Calu3 (cell line): ENCODE measurements at regions of chr3 and their contacts with region 1.

Region 1: GRCh38 chr3:48439820-48440589 is at the starts of genes CCDC51 and TMA7:
- DNase-seq: peak; percentile 97
- H3K4me3 Mint-ChIP-seq: peak within 1 kb of the TSS; percentile 90
- H3K27ac Mint-ChIP-seq: peak within 1 kb of the TSS; percentile 88
- H3K4me1 Mint-ChIP-seq: peaks cover 21% of the 10 kb centered on the region
- H3K27me3 Mint-ChIP-seq: no peaks in the 10 kb centered on the region
- CTCF ChIP-seq: no peak
- total RNA-seq, gene CCDC51: 18.9 and 19.9 TPM in 2 replicates
- total RNA-seq, gene TMA7: 139 and 171 TPM in 2 replicates

Region 2: GRCh38 chr3:47688488-47688887 is 751.5 kb before region 1 on chr3:
- CTCF ChIA-PET with region 1: no interaction called
- intact Hi-C with region 1: no loop called
- DNase-seq: no peak
- H3K4me3 Mint-ChIP-seq: no peak overlapping the region
- H3K27ac Mint-ChIP-seq: no peak overlapping the region
- H3K4me1 Mint-ChIP-seq: no peaks in the 10 kb centered on the region
- H3K27me3 Mint-ChIP-seq: no peaks in the 10 kb centered on the region
- CTCF ChIP-seq: no peak

Region 3: DNA sequence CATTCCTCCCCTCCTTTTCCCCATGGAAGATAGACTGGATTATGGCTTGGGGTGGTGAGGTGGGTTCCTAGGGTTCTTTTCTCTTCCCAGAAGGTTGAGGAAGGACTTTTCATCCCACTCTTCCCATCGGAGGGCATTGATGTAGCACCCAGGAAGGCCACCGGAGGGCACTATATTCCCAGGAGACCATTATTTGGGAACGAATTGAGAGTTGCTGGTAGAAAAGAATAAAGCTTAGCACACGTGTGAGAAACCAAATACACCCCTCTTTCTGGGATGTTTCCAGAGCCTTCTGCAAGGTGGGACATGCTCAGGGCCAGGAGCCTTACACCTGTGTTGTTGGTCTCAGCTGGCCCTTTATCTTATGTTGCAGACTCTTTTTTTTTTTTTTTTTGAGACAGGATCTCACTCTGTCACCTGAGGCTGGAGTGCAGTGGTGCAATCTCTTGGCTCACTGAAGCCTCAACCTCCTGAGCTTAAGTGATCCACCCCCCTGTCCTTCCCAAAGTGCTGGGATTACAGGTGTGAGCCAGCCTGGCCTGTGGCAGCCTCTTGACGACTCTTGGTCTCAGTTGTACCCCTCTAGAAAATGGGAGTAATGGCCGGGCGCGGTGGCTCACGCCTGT is 245.4 kb before region 1 on chr3:
- CTCF ChIA-PET with region 1: interaction called, 16 read pairs
- intact Hi-C with region 1: no loop called
- DNase-seq: peak; percentile 78
- H3K4me3 Mint-ChIP-seq: no peak overlapping the region
- H3K27ac Mint-ChIP-seq: no peak overlapping the region
- H3K4me1 Mint-ChIP-seq: peaks cover 13% of the 10 kb centered on the region
- H3K27me3 Mint-ChIP-seq: peaks cover 10% of the 10 kb centered on the region
- CTCF ChIP-seq: peak; percentile 70

Region 4: GRCh38 chr3:48232734-48233133 is 207.3 kb before region 1 on chr3:
- CTCF ChIA-PET with region 1: interaction called, 4 read pairs
- intact Hi-C with region 1: loop called (anchors 2 kb)
- DNase-seq: peak; percentile 82
- H3K4me3 Mint-ChIP-seq: no peak overlapping the region
- H3K27ac Mint-ChIP-seq: no peak overlapping the region
- H3K4me1 Mint-ChIP-seq: peaks cover 14% of the 10 kb centered on the region
- H3K27me3 Mint-ChIP-seq: no peaks in the 10 kb centered on the region
- CTCF ChIP-seq: peak; percentile 43

Region 5: GRCh38 chr3:48268381-48269183 is 171.4 kb before region 1 on chr3:
- CTCF ChIA-PET with region 1: interaction called, 83 read pairs
- intact Hi-C with region 1: loop called (anchors 1 kb)
- DNase-seq: peak; percentile 74
- H3K4me3 Mint-ChIP-seq: peak overlapping the region; percentile 57
- H3K27ac Mint-ChIP-seq: peak overlapping the region; percentile 84
- H3K4me1 Mint-ChIP-seq: peaks cover 33% of the 10 kb centered on the region
- H3K27me3 Mint-ChIP-seq: no peaks in the 10 kb centered on the region
- CTCF ChIP-seq: no peak

Region 6: GRCh38 chr3:48273594-48274211 is 166.3 kb before region 1 on chr3:
- CTCF ChIA-PET with region 1: interaction called, 83 read pairs
- intact Hi-C with region 1: loop called (anchors 1 kb)
- DNase-seq: peak; percentile 69
- H3K4me3 Mint-ChIP-seq: no peak overlapping the region
- H3K27ac Mint-ChIP-seq: no peak overlapping the region
- H3K4me1 Mint-ChIP-seq: peaks cover 33% of the 10 kb centered on the region
- H3K27me3 Mint-ChIP-seq: no peaks in the 10 kb centered on the region
- CTCF ChIP-seq: peak; percentile 64

Region 7: DNA sequence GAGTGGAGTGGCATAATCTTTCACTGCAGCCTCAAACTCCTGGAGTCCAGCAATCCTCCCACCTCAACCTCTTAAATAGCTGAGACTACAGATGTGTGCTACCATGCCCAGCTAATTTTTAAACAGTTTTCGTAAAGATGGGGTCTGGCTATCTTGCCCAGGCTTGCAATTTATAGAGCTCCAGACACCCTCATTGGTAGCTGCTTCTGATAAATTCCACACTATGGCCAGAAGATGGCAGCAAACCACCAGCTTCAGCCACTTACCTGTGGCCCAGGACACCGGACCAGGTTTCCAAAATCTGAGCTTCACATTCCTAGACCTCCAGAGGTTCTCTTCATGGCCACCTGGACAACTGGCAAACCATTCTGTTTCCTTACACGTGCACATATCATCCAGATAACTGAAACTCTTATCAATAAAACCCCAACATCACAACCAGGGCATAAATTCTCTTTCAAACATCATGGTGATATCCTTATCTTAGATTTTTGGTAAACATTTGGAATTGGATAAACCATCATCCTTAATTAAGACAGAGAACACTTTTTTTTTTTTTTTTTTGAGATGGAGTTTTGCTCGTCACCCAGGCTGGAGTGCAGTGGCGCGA is 39.1 kb before region 1 on chr3:
- CTCF ChIA-PET with region 1: interaction called, 243 read pairs
- intact Hi-C with region 1: loop called (anchors 1 kb)
- DNase-seq: peak; percentile 60
- H3K4me3 Mint-ChIP-seq: no peak overlapping the region
- H3K27ac Mint-ChIP-seq: peak overlapping the region; percentile 36
- H3K4me1 Mint-ChIP-seq: peaks cover 13% of the 10 kb centered on the region
- H3K27me3 Mint-ChIP-seq: peaks cover 5% of the 10 kb centered on the region
- CTCF ChIP-seq: peak; percentile 66

Region 8: DNA sequence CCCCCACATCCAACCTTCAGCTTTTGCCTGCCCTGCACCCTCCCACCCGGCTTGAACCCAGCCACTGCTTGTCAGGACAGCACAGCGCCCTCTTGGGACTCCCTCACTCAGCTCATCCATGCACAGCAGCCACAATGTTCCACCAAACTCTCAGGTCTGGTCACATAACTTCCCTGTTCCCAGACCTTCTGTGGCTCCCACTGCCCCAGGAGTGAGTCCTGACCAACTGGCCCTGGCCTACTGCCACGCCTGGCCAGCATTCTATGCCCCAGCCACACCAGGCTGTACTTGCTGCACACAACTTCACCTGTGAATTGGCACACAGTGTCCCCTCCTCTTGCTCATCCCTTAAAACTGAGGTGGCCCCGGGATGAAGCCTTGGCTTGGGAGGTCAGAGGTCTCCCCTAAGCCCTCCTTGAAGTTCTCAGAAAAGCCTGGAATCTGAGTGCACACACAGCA is 31.2 kb before region 1 on chr3:
- CTCF ChIA-PET with region 1: interaction called, 14 read pairs
- intact Hi-C with region 1: no loop called
- DNase-seq: no peak
- H3K4me3 Mint-ChIP-seq: no peak overlapping the region
- H3K27ac Mint-ChIP-seq: no peak overlapping the region
- H3K4me1 Mint-ChIP-seq: no peaks in the 10 kb centered on the region
- H3K27me3 Mint-ChIP-seq: no peaks in the 10 kb centered on the region
- CTCF ChIP-seq: no peak